ENCODE measurements at regions of chr5 and their contacts with region 1.

Region 1: GRCh38 chr5:160271396-160271795 is 41.0 kb downstream of the CCNJL start:
- DNase-seq: peak; percentile 9 to 31
- ATAC-seq: peak; percentile 47 to 63 (median 56)
- H3K4me3 ChIP-seq: no peak overlapping the region
- H3K4me3 Mint-ChIP-seq: peak overlapping the region; percentile 59
- H3K27ac ChIP-seq: peak overlapping the region; percentile 23
- H3K27ac Mint-ChIP-seq: peak overlapping the region; percentile 80 to 87
- H3K4me1 ChIP-seq: peaks cover 79% of the 10 kb centered on the region
- H3K4me1 Mint-ChIP-seq: peaks cover 61 to 68% of the 10 kb centered on the region in 2 donors
- H3K27me3 ChIP-seq: no peaks in the 10 kb centered on the region
- H3K27me3 Mint-ChIP-seq: no peaks in the 10 kb centered on the region
- CTCF ChIP-seq: no peak

Region 2: GRCh38 chr5:160293901-160294561 is 22.6 kb after region 1 on chr5:
- intact Hi-C with region 1: loop called (anchors 1 kb)
- DNase-seq: peak; percentile 32 to 54
- ATAC-seq: peak; percentile 52 to 74 (median 67)
- H3K4me3 ChIP-seq: no peak overlapping the region
- H3K4me3 Mint-ChIP-seq: peak overlapping the region; percentile 88
- H3K27ac ChIP-seq: peak overlapping the region; percentile 91
- H3K27ac Mint-ChIP-seq: peak overlapping the region; percentile 89 to 98
- H3K4me1 ChIP-seq: peaks cover 94% of the 10 kb centered on the region
- H3K4me1 Mint-ChIP-seq: peaks cover 85 to 91% of the 10 kb centered on the region in 2 donors
- H3K27me3 ChIP-seq: no peaks in the 10 kb centered on the region
- H3K27me3 Mint-ChIP-seq: no peaks in the 10 kb centered on the region
- CTCF ChIP-seq: no peak

Region 3: GRCh38 chr5:160312134-160312959 is 41.0 kb after region 1 on chr5 and contains the start of gene CCNJL:
- intact Hi-C with region 1: loop called (anchors 1 kb)
- DNase-seq: peak; percentile 9 to 47
- ATAC-seq: peak; percentile 61 to 72 (median 66)
- H3K4me3 ChIP-seq: peak within 1 kb of the TSS; percentile 70
- H3K4me3 Mint-ChIP-seq: peak within 1 kb of the TSS; percentile 100
- H3K27ac ChIP-seq: no peak within 1 kb of the TSS
- H3K27ac Mint-ChIP-seq: peak within 1 kb of the TSS; percentile 87 to 89
- H3K4me1 ChIP-seq: peaks cover 24% of the 10 kb centered on the region
- H3K4me1 Mint-ChIP-seq: peaks cover 45% of the 10 kb centered on the region in 2 donors
- H3K27me3 ChIP-seq: no peaks in the 10 kb centered on the region
- H3K27me3 Mint-ChIP-seq: peaks cover 0 to 2% of the 10 kb centered on the region in 2 donors
- CTCF ChIP-seq: no peak
- total RNA-seq, gene CCNJL: 19.9 to 32.1 (median 20.7) TPM

Measured in natural killer cell (primary cell).